ENCODE measurements at regions of chr4 and their contacts with region 1.

Region 1: DNA sequence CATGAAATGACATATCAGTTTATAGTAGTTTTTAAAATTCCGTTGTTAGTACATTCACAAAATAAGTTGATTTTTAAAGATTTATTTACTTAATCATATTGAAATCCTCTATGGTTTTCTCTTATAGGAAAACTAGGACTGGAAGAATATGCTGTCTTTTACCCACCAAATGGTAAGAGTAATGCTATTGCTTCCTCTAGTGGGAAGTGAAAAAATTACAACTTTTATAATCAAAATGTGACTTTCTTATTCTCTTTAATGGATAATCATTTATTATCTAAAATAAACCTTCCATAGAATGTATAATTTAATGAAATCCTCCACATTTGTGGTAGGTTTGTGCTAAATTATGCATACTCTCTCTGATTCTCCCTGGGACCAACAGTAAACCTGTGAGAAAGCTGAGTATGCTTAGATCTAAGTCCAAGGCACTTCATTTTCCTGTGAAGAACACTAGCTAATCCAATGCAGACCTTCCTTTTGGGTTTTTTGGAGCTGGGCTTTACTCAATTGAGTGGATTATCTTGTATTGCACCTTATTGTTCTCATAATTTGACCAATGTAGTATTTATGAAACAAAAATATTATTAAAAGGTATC is 136.2 kb downstream of the TBC1D19 start:
- DNase-seq: no peak
- H3K4me3 ChIP-seq: no peak overlapping the region
- H3K4me3 Mint-ChIP-seq: no peak overlapping the region
- H3K27ac Mint-ChIP-seq: no peak overlapping the region
- H3K4me1 ChIP-seq: no peaks in the 10 kb centered on the region
- H3K4me1 Mint-ChIP-seq: no peaks in the 10 kb centered on the region
- H3K27me3 ChIP-seq: no peaks in the 10 kb centered on the region
- H3K27me3 Mint-ChIP-seq: no peaks in the 10 kb centered on the region
- CTCF ChIP-seq: peak; percentile 33 to 59

Region 2: GRCh38 chr4:26424838-26425237 is 295.2 kb before region 1 on chr4:
- CTCF ChIA-PET with region 1: no interaction called
- POLR2A ChIA-PET with region 1: no interaction called
- intact Hi-C with region 1: loop called (anchors 10 kb)
- DNase-seq: no peak
- H3K4me3 ChIP-seq: no peak overlapping the region
- H3K4me3 Mint-ChIP-seq: no peak overlapping the region
- H3K27ac Mint-ChIP-seq: no peak overlapping the region
- H3K4me1 ChIP-seq: no peaks in the 10 kb centered on the region
- H3K4me1 Mint-ChIP-seq: peaks cover 21% of the 10 kb centered on the region
- H3K27me3 ChIP-seq: no peaks in the 10 kb centered on the region
- H3K27me3 Mint-ChIP-seq: no peaks in the 10 kb centered on the region
- CTCF ChIP-seq: no peak

Region 3: GRCh38 chr4:26484032-26484515 is 236.0 kb before region 1 on chr4:
- CTCF ChIA-PET with region 1: no interaction called
- POLR2A ChIA-PET with region 1: no interaction called
- intact Hi-C with region 1: loop called (anchors 10 kb)
- DNase-seq: peak; percentile 27 to 49
- H3K4me3 ChIP-seq: no peak overlapping the region
- H3K4me3 Mint-ChIP-seq: no peak overlapping the region
- H3K27ac Mint-ChIP-seq: no peak overlapping the region
- H3K4me1 ChIP-seq: peaks cover 33% of the 10 kb centered on the region
- H3K4me1 Mint-ChIP-seq: peaks cover 7% of the 10 kb centered on the region
- H3K27me3 ChIP-seq: no peaks in the 10 kb centered on the region
- H3K27me3 Mint-ChIP-seq: no peaks in the 10 kb centered on the region
- CTCF ChIP-seq: no peak

Region 4: DNA sequence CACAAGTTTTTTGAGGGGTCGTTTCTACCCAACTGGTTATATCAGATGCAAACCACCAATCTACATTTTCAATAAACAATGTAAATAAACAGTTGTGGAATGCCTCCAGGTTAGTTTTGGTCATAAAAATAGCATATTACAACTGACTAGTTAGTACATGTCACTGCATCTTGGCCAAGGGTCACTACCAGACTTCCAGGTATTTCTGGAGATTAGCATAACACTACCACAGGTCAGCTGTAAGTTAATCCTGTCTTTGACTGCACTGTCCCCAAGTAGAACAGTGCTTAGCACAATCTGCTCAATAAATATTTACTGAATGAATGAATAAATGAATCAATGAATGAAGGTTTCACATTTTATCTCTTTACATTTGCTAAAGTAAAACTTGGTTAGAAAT is 71.8 kb before region 1 on chr4:
- CTCF ChIA-PET with region 1: no interaction called
- POLR2A ChIA-PET with region 1: no interaction called
- intact Hi-C with region 1: loop called (anchors 2 kb)
- DNase-seq: peak in 1 of 2 experiments; percentile 13
- H3K4me3 ChIP-seq: no peak overlapping the region
- H3K4me3 Mint-ChIP-seq: no peak overlapping the region
- H3K27ac Mint-ChIP-seq: no peak overlapping the region
- H3K4me1 ChIP-seq: no peaks in the 10 kb centered on the region
- H3K4me1 Mint-ChIP-seq: peaks cover 6% of the 10 kb centered on the region
- H3K27me3 ChIP-seq: no peaks in the 10 kb centered on the region
- H3K27me3 Mint-ChIP-seq: no peaks in the 10 kb centered on the region
- CTCF ChIP-seq: no peak

Region 5: GRCh38 chr4:26896636-26897035 is 176.6 kb after region 1 on chr4:
- CTCF ChIA-PET with region 1: no interaction called
- POLR2A ChIA-PET with region 1: no interaction called
- intact Hi-C with region 1: no loop called
- DNase-seq: no peak
- H3K4me3 ChIP-seq: no peak overlapping the region
- H3K4me3 Mint-ChIP-seq: no peak overlapping the region
- H3K27ac Mint-ChIP-seq: no peak overlapping the region
- H3K4me1 ChIP-seq: no peaks in the 10 kb centered on the region
- H3K4me1 Mint-ChIP-seq: no peaks in the 10 kb centered on the region
- H3K27me3 ChIP-seq: no peaks in the 10 kb centered on the region
- H3K27me3 Mint-ChIP-seq: no peaks in the 10 kb centered on the region
- CTCF ChIP-seq: no peak